Ovary (tissue), 10 donors: ENCODE measurements at regions of chr3 and their contacts with region 1.

Region 1: DNA sequence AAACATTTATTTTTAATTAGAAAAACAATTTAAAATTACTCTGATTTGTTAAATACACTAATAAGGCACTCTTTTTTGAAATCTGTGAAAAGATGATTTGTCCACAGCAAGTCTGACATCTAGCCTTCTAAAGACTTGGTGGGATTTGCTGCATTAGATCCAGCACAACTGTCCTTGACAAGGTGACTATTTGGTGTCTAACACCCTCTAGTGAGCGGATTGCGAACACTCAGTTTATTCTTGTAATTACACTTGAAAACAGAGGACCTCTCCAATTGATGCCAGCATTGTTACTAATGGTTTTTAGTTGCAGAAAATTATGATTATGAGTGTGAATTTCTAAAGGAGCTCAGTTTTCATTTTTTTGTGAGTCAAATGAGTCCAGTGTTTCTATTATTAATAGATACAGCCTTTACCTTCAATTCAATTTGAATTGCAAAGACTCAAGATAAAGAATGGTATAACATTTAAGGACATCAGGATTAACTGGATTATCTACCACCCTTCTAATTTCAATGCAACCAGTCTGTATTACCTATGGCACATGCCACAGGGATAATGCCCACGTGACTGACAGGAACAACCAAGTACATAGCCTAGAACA is 29.7 kb upstream of the STRIT1 start:
- DNase-seq: no peak
- H3K4me3 ChIP-seq: no peak overlapping the region
- H3K27ac ChIP-seq: no peak overlapping the region
- H3K4me1 ChIP-seq: no peaks in the 10 kb centered on the region
- H3K27me3 ChIP-seq: no peaks in the 10 kb centered on the region
- CTCF ChIP-seq: no peak
- EP300 ChIP-seq: no peak
- POLR2A ChIP-seq: no peak

Region 2: DNA sequence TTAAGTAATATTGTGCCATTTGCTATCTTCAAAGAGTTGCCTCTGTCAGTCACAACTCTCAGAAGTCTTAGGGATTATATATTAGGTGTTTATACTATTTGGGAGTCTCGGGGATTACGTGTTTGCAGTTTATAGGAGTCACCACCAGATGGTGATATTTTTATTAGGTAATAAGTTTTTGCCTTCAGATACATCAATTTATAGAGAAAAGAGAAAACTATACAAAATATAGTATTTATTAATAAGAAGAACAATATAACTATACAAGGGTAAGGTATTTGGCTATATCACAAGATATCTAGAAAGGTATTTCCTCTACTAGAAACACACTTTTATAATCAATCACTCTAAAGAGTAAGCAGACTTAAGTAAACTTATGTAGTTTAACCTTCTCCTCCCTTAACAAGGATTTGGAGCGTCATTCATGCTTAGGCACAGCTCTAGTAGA is 988.2 kb before region 1 on chr3:
- intact Hi-C with region 1: loop called in 1 of 4 experiments (anchors 10 kb)
- DNase-seq: no peak
- H3K4me3 ChIP-seq: no peak overlapping the region
- H3K27ac ChIP-seq: no peak overlapping the region
- H3K4me1 ChIP-seq: no peaks in the 10 kb centered on the region
- H3K27me3 ChIP-seq: no peaks in the 10 kb centered on the region
- CTCF ChIP-seq: peak in 2 of 3 donors; percentile 19 to 27
- EP300 ChIP-seq: no peak
- POLR2A ChIP-seq: no peak

Region 3: DNA sequence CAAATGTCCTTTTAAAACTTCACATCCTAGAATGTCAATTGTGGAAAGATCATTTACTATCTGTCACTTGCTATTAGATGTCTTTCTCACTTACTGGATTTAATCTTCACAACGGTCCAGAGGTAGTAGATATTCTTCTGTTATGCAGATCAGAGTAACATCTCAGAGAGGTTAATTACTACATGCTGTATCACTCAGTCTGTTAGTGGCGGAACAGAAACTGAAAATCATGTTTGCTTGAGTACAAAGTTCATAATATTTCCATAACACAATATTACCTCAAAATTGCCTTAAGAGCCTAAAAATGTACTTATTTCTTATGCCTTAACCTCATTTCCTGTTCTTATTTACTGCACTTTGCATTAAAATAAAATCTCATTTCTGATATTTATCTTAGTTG is 864.6 kb before region 1 on chr3:
- intact Hi-C with region 1: no loop called
- DNase-seq: no peak
- H3K4me3 ChIP-seq: no peak overlapping the region
- H3K27ac ChIP-seq: no peak overlapping the region
- H3K4me1 ChIP-seq: no peaks in the 10 kb centered on the region
- H3K27me3 ChIP-seq: no peaks in the 10 kb centered on the region
- CTCF ChIP-seq: no peak
- EP300 ChIP-seq: no peak
- POLR2A ChIP-seq: no peak

Region 4: GRCh38 chr3:154743418-154743817 is 579.7 kb before region 1 on chr3:
- intact Hi-C with region 1: no loop called
- DNase-seq: no peak
- H3K4me3 ChIP-seq: no peak overlapping the region
- H3K27ac ChIP-seq: no peak overlapping the region
- H3K4me1 ChIP-seq: no peaks in the 10 kb centered on the region
- H3K27me3 ChIP-seq: no peaks in the 10 kb centered on the region
- CTCF ChIP-seq: no peak
- EP300 ChIP-seq: no peak
- POLR2A ChIP-seq: no peak

Region 5: GRCh38 chr3:155370198-155370597 is 47.0 kb after region 1 on chr3:
- intact Hi-C with region 1: no loop called
- DNase-seq: no peak
- H3K4me3 ChIP-seq: no peak overlapping the region
- H3K27ac ChIP-seq: no peak overlapping the region
- H3K4me1 ChIP-seq: no peaks in the 10 kb centered on the region
- H3K27me3 ChIP-seq: no peaks in the 10 kb centered on the region
- CTCF ChIP-seq: no peak
- EP300 ChIP-seq: no peak
- POLR2A ChIP-seq: no peak